CD4-positive, alpha-beta T cell (primary cell): ENCODE measurements at regions of chr19 and their contacts with region 1.

Region 1: GRCh38 chr19:45902651-45903625 is 525 bp upstream of the MYPOP start:
- DNase-seq: peak; percentile 97 to 100 (median 99)
- ATAC-seq: peak; percentile 81
- H3K4me3 ChIP-seq: peak overlapping the region; percentile 64
- H3K4me3 Mint-ChIP-seq: peak overlapping the region; percentile 95
- H3K27ac ChIP-seq: peak overlapping the region; percentile 68 to 85
- H3K27ac Mint-ChIP-seq: peak overlapping the region; percentile 89
- H3K4me1 ChIP-seq: peaks cover 26% of the 10 kb centered on the region
- H3K4me1 Mint-ChIP-seq: peaks cover 28% of the 10 kb centered on the region
- H3K27me3 ChIP-seq: no peaks in the 10 kb centered on the region
- H3K27me3 Mint-ChIP-seq: no peaks in the 10 kb centered on the region
- CTCF ChIP-seq: no peak

Region 2: GRCh38 chr19:45862564-45863334 is 40.2 kb before region 1 on chr19 and contains the start of gene SYMPK:
- CTCF ChIA-PET with region 1: interaction called, 14 read pairs
- POLR2A ChIA-PET with region 1: interaction called, 21 read pairs
- intact Hi-C with region 1: loop called in 1 of 2 experiments (anchors 5 kb)
- DNase-seq: peak; percentile 96 to 99 (median 98)
- ATAC-seq: peak; percentile 97
- H3K4me3 ChIP-seq: peak within 1 kb of the TSS; percentile 80
- H3K4me3 Mint-ChIP-seq: peak within 1 kb of the TSS; percentile 99
- H3K27ac ChIP-seq: peak within 1 kb of the TSS; percentile 66 to 86
- H3K27ac Mint-ChIP-seq: peak within 1 kb of the TSS; percentile 83
- H3K4me1 ChIP-seq: peaks cover 29% of the 10 kb centered on the region
- H3K4me1 Mint-ChIP-seq: peaks cover 34% of the 10 kb centered on the region
- H3K27me3 ChIP-seq: peaks cover 9 to 13% of the 10 kb centered on the region in 2 experiments
- H3K27me3 Mint-ChIP-seq: peaks cover 29% of the 10 kb centered on the region
- CTCF ChIP-seq: no peak
- total RNA-seq, gene SYMPK: 63.3 to 65.0 TPM

Region 3: DNA sequence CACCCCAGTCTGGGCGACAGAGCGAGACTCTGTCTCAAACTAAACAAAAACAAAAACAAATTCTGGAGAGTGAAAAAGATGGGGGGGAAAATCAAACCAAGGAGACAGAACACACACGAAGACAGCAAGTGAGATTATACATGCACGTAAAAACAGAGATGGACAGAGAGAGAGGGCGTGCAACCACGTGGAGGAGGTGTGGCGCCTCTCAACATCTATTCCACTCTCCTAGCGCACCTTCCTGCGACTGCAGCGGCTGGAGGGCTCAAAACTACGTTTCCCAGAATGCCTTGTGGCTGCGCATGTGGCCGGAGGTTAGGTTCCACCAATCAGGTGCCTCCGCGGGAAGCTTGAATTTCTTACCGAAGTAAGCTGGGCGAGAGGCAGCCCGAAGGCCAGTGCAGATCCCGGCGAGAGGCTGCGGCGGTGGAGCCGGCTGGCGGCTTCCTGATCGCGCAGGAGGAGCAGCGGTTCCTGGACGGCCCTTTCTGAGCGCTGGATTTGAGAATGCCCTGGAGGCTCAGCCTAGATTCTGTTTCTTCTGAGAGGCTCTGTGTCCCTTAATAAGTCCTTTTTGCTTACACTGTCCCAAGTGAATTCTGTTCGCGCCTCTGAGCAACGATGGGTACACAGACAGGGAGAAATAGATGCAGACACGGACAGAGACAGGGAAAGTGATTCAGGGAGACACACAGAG is 24.8 kb after region 1 on chr19:
- CTCF ChIA-PET with region 1: interaction called, 7 read pairs
- POLR2A ChIA-PET with region 1: interaction called, 4 read pairs
- intact Hi-C with region 1: loop called in 1 of 2 experiments (anchors 1 kb)
- DNase-seq: peak; percentile 78 to 95 (median 84)
- ATAC-seq: peak; percentile 100
- H3K4me3 ChIP-seq: no peak overlapping the region
- H3K4me3 Mint-ChIP-seq: peak overlapping the region; percentile 25
- H3K27ac ChIP-seq: no peak overlapping the region
- H3K27ac Mint-ChIP-seq: no peak overlapping the region
- H3K4me1 ChIP-seq: peaks cover 9% of the 10 kb centered on the region
- H3K4me1 Mint-ChIP-seq: peaks cover 9% of the 10 kb centered on the region
- H3K27me3 ChIP-seq: no peaks in the 10 kb centered on the region
- H3K27me3 Mint-ChIP-seq: peaks cover 22% of the 10 kb centered on the region
- CTCF ChIP-seq: no peak